ENCODE measurements at regions of chr4 and their contacts with region 1.

Region 1: GRCh38 chr4:88211473-88212252 is 53.2 kb upstream of the ABCG2 start:
- DNase-seq: peak in 7 of 9 experiments; percentile 24 to 67 (median 52)
- ATAC-seq: peak; percentile 36
- H3K4me3 ChIP-seq: no peak overlapping the region
- H3K4me3 Mint-ChIP-seq: no peak overlapping the region
- H3K27ac ChIP-seq: no peak overlapping the region
- H3K27ac Mint-ChIP-seq: no peak overlapping the region
- H3K4me1 ChIP-seq: no peaks in the 10 kb centered on the region
- H3K4me1 Mint-ChIP-seq: peaks cover 3% of the 10 kb centered on the region
- H3K27me3 ChIP-seq: no peaks in the 10 kb centered on the region
- H3K27me3 Mint-ChIP-seq: peaks cover 3% of the 10 kb centered on the region
- CTCF ChIP-seq: peak; percentile 63

Region 2: DNA sequence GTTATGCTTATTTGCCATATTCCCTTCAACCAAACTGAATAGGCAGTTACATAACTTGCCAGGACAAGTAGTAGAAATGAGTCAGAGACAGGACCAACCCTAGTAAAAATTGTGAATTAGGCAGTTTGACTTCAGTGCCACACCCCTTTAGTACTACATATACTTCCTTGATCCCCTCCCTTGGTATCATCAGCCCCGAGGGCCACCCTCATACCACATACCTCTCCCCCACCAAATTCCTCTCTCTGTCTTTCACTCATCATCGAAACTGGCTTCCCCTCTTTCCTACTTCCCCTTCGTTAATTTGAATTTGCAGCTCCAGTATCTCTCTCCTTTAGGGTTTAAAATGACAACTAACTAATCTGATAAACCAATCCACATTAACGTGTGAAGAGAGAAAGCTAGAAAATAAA is 1625.5 kb before region 1 on chr4:
- CTCF ChIA-PET with region 1: no interaction called
- POLR2A ChIA-PET with region 1: no interaction called
- intact Hi-C with region 1: no loop called
- DNase-seq: no peak
- ATAC-seq: no peak
- H3K4me3 ChIP-seq: no peak overlapping the region
- H3K4me3 Mint-ChIP-seq: no peak overlapping the region
- H3K27ac ChIP-seq: no peak overlapping the region
- H3K27ac Mint-ChIP-seq: no peak overlapping the region
- H3K4me1 ChIP-seq: no peaks in the 10 kb centered on the region
- H3K4me1 Mint-ChIP-seq: no peaks in the 10 kb centered on the region
- H3K27me3 ChIP-seq: no peaks in the 10 kb centered on the region
- H3K27me3 Mint-ChIP-seq: peaks cover 7% of the 10 kb centered on the region
- CTCF ChIP-seq: no peak

Region 3: GRCh38 chr4:87375719-87376291 is 835.9 kb before region 1 on chr4:
- CTCF ChIA-PET with region 1: no interaction called
- POLR2A ChIA-PET with region 1: no interaction called
- intact Hi-C with region 1: loop called in 1 of 2 experiments (anchors 10 kb)
- DNase-seq: peak in 2 of 9 experiments; percentile 51 to 66
- ATAC-seq: peak; percentile 63
- H3K4me3 ChIP-seq: no peak overlapping the region
- H3K4me3 Mint-ChIP-seq: no peak overlapping the region
- H3K27ac ChIP-seq: no peak overlapping the region
- H3K27ac Mint-ChIP-seq: no peak overlapping the region
- H3K4me1 ChIP-seq: no peaks in the 10 kb centered on the region
- H3K4me1 Mint-ChIP-seq: peaks cover 5% of the 10 kb centered on the region
- H3K27me3 ChIP-seq: no peaks in the 10 kb centered on the region
- H3K27me3 Mint-ChIP-seq: no peaks in the 10 kb centered on the region
- CTCF ChIP-seq: peak; percentile 76

Region 4: GRCh38 chr4:87679449-87680169 is 532.1 kb before region 1 on chr4:
- CTCF ChIA-PET with region 1: interaction called, 9 read pairs
- POLR2A ChIA-PET with region 1: no interaction called
- intact Hi-C with region 1: loop called (anchors 1 kb)
- DNase-seq: peak in 7 of 9 experiments; percentile 9 to 57 (median 22)
- ATAC-seq: no peak
- H3K4me3 ChIP-seq: no peak overlapping the region
- H3K4me3 Mint-ChIP-seq: no peak overlapping the region
- H3K27ac ChIP-seq: no peak overlapping the region
- H3K27ac Mint-ChIP-seq: no peak overlapping the region
- H3K4me1 ChIP-seq: no peaks in the 10 kb centered on the region
- H3K4me1 Mint-ChIP-seq: no peaks in the 10 kb centered on the region
- H3K27me3 ChIP-seq: no peaks in the 10 kb centered on the region
- H3K27me3 Mint-ChIP-seq: peaks cover 2% of the 10 kb centered on the region
- CTCF ChIP-seq: peak; percentile 83

Region 5: GRCh38 chr4:87973283-87974169 is 238.1 kb before region 1 on chr4:
- CTCF ChIA-PET with region 1: interaction called, 3 read pairs
- POLR2A ChIA-PET with region 1: no interaction called
- intact Hi-C with region 1: loop called in 1 of 2 experiments (anchors 5 kb)
- DNase-seq: peak in 5 of 9 experiments; percentile 16 to 53 (median 42)
- ATAC-seq: peak; percentile 74
- H3K4me3 ChIP-seq: no peak overlapping the region
- H3K4me3 Mint-ChIP-seq: no peak overlapping the region
- H3K27ac ChIP-seq: no peak overlapping the region
- H3K27ac Mint-ChIP-seq: no peak overlapping the region
- H3K4me1 ChIP-seq: peaks cover 6% of the 10 kb centered on the region
- H3K4me1 Mint-ChIP-seq: peaks cover 12% of the 10 kb centered on the region
- H3K27me3 ChIP-seq: peaks cover 0 to 4% of the 10 kb centered on the region in 2 experiments
- H3K27me3 Mint-ChIP-seq: peaks cover 27% of the 10 kb centered on the region
- CTCF ChIP-seq: peak; percentile 66

Region 6: GRCh38 chr4:88033309-88033708 is 178.4 kb before region 1 on chr4:
- CTCF ChIA-PET with region 1: interaction called, 71 read pairs
- POLR2A ChIA-PET with region 1: interaction called, 5 read pairs
- intact Hi-C with region 1: loop called (anchors 1 kb)
- DNase-seq: peak in 4 of 9 experiments; percentile 19 to 71 (median 44)
- ATAC-seq: no peak
- H3K4me3 ChIP-seq: no peak overlapping the region
- H3K4me3 Mint-ChIP-seq: no peak overlapping the region
- H3K27ac ChIP-seq: no peak overlapping the region
- H3K27ac Mint-ChIP-seq: no peak overlapping the region
- H3K4me1 ChIP-seq: no peaks in the 10 kb centered on the region
- H3K4me1 Mint-ChIP-seq: no peaks in the 10 kb centered on the region
- H3K27me3 ChIP-seq: no peaks in the 10 kb centered on the region
- H3K27me3 Mint-ChIP-seq: no peaks in the 10 kb centered on the region
- CTCF ChIP-seq: peak; percentile 49

Region 7: GRCh38 chr4:88378691-88379559 is 167.3 kb after region 1 on chr4 and contains the start of gene HERC6:
- CTCF ChIA-PET with region 1: interaction called, 3 read pairs
- POLR2A ChIA-PET with region 1: no interaction called
- intact Hi-C with region 1: loop called in 1 of 2 experiments (anchors 5 kb)
- DNase-seq: peak; percentile 39 to 93 (median 73)
- ATAC-seq: peak; percentile 63
- H3K4me3 ChIP-seq: peak within 1 kb of the TSS; percentile 82 to 98
- H3K4me3 Mint-ChIP-seq: peak within 1 kb of the TSS; percentile 96
- H3K27ac ChIP-seq: peak within 1 kb of the TSS; percentile 88 to 91
- H3K27ac Mint-ChIP-seq: peak within 1 kb of the TSS; percentile 95
- H3K4me1 ChIP-seq: peaks cover 31% of the 10 kb centered on the region
- H3K4me1 Mint-ChIP-seq: peaks cover 43% of the 10 kb centered on the region
- H3K27me3 ChIP-seq: no peaks in the 10 kb centered on the region
- H3K27me3 Mint-ChIP-seq: no peaks in the 10 kb centered on the region
- CTCF ChIP-seq: peak; percentile 57
- total RNA-seq, gene HERC6: 8.2 TPM

Region 8: GRCh38 chr4:89024051-89024675 is 812.5 kb after region 1 on chr4:
- CTCF ChIA-PET with region 1: interaction called, 3 read pairs
- POLR2A ChIA-PET with region 1: no interaction called
- intact Hi-C with region 1: loop called in 1 of 2 experiments (anchors 5 kb)
- DNase-seq: peak; percentile 5 to 82 (median 46)
- ATAC-seq: peak; percentile 100
- H3K4me3 ChIP-seq: no peak overlapping the region
- H3K4me3 Mint-ChIP-seq: no peak overlapping the region
- H3K27ac ChIP-seq: no peak overlapping the region
- H3K27ac Mint-ChIP-seq: no peak overlapping the region
- H3K4me1 ChIP-seq: no peaks in the 10 kb centered on the region
- H3K4me1 Mint-ChIP-seq: no peaks in the 10 kb centered on the region
- H3K27me3 ChIP-seq: no peaks in the 10 kb centered on the region
- H3K27me3 Mint-ChIP-seq: peaks cover 10% of the 10 kb centered on the region
- CTCF ChIP-seq: peak; percentile 87

Measured in CD8-positive, alpha-beta T cell (primary cell).